ENCODE measurements at regions of chrX and their contacts with region 1.

Region 1: GRCh38 chrX:47193475-47194193 is at the start of gene UBA1:
- DNase-seq: peak; percentile 69 to 97 (median 95)
- ATAC-seq: peak; percentile 89
- H3K4me3 ChIP-seq: peak within 1 kb of the TSS; percentile 82
- H3K4me3 Mint-ChIP-seq: peak within 1 kb of the TSS; percentile 94 to 100 (median 98)
- H3K27ac ChIP-seq: peak within 1 kb of the TSS; percentile 94
- H3K27ac Mint-ChIP-seq: peak within 1 kb of the TSS; percentile 95 to 100 (median 98)
- H3K4me1 ChIP-seq: peaks cover 16 to 25% of the 10 kb centered on the region in 2 donors
- H3K4me1 Mint-ChIP-seq: peaks cover 19 to 77% (median 53%) of the 10 kb centered on the region in 7 donors
- H3K27me3 ChIP-seq: no peaks in the 10 kb centered on the region
- H3K27me3 Mint-ChIP-seq: no peaks in the 10 kb centered on the region
- total RNA-seq, gene UBA1: 98.0 to 183 (median 118) TPM

Region 2: GRCh38 chrX:47144626-47145394 is 48.8 kb before region 1 on chrX and contains the starts of genes NDUFB11 and RBM10:
- CTCF ChIA-PET with region 1: interaction called, 3 read pairs
- POLR2A ChIA-PET with region 1: interaction called, 25 read pairs
- intact Hi-C with region 1: loop called (anchors 1 kb)
- DNase-seq: peak; percentile 64 to 90 (median 87)
- ATAC-seq: peak; percentile 95
- H3K4me3 ChIP-seq: peak within 1 kb of the TSS; percentile 77
- H3K4me3 Mint-ChIP-seq: peak within 1 kb of the TSS; percentile 92 to 99 (median 96)
- H3K27ac ChIP-seq: peak within 1 kb of the TSS; percentile 94
- H3K27ac Mint-ChIP-seq: peak within 1 kb of the TSS; percentile 93 to 99 (median 96)
- H3K4me1 ChIP-seq: peaks cover 6 to 12% of the 10 kb centered on the region in 2 donors
- H3K4me1 Mint-ChIP-seq: peaks cover 6 to 42% (median 26%) of the 10 kb centered on the region in 7 donors
- H3K27me3 ChIP-seq: no peaks in the 10 kb centered on the region
- H3K27me3 Mint-ChIP-seq: no peaks in the 10 kb centered on the region
- total RNA-seq, gene NDUFB11: 51.3 to 92.5 (median 55.2) TPM
- total RNA-seq, gene RBM10: 31.8 to 55.6 (median 47.6) TPM

Region 3: GRCh38 chrX:47311932-47312774 is 118.5 kb after region 1 on chrX:
- CTCF ChIA-PET with region 1: no interaction called
- POLR2A ChIA-PET with region 1: interaction called, 3 read pairs
- intact Hi-C with region 1: loop called (anchors 1 kb)
- DNase-seq: peak; percentile 6 to 57 (median 39)
- ATAC-seq: peak; percentile 69
- H3K4me3 ChIP-seq: no peak overlapping the region
- H3K4me3 Mint-ChIP-seq: no peak overlapping the region
- H3K27ac ChIP-seq: no peak overlapping the region
- H3K27ac Mint-ChIP-seq: no peak overlapping the region
- H3K4me1 ChIP-seq: no peaks in the 10 kb centered on the region
- H3K4me1 Mint-ChIP-seq: no peaks in the 10 kb centered on the region
- H3K27me3 ChIP-seq: no peaks in the 10 kb centered on the region
- H3K27me3 Mint-ChIP-seq: no peaks in the 10 kb centered on the region

Region 4: GRCh38 chrX:47482512-47483309 is 289.1 kb after region 1 on chrX and contains the start of gene ZNF41:
- CTCF ChIA-PET with region 1: interaction called, 3 read pairs
- POLR2A ChIA-PET with region 1: interaction called, 4 read pairs
- intact Hi-C with region 1: loop called (anchors 1 kb)
- DNase-seq: peak; percentile 48 to 84 (median 76)
- ATAC-seq: peak; percentile 95
- H3K4me3 ChIP-seq: peak within 1 kb of the TSS; percentile 85
- H3K4me3 Mint-ChIP-seq: peak within 1 kb of the TSS; percentile 81 to 97 (median 90)
- H3K27ac ChIP-seq: peak within 1 kb of the TSS; percentile 88
- H3K27ac Mint-ChIP-seq: peak within 1 kb of the TSS; percentile 82 to 98 (median 96)
- H3K4me1 ChIP-seq: peaks cover 9 to 22% of the 10 kb centered on the region in 2 donors
- H3K4me1 Mint-ChIP-seq: peaks cover 22 to 50% (median 37%) of the 10 kb centered on the region in 7 donors
- H3K27me3 ChIP-seq: no peaks in the 10 kb centered on the region
- H3K27me3 Mint-ChIP-seq: no peaks in the 10 kb centered on the region
- total RNA-seq, gene ZNF41: 7.5 to 17.8 (median 14.7) TPM

Region 5: GRCh38 chrX:47619486-47620302 is 426.1 kb after region 1 on chrX and contains the start of gene SYN1:
- CTCF ChIA-PET with region 1: no interaction called
- POLR2A ChIA-PET with region 1: no interaction called
- intact Hi-C with region 1: loop called in 1 of 2 experiments (anchors 5 kb)
- DNase-seq: peak; percentile 66 to 84 (median 75)
- ATAC-seq: peak; percentile 96
- H3K4me3 ChIP-seq: peak within 1 kb of the TSS; percentile 35
- H3K4me3 Mint-ChIP-seq: peak within 1 kb of the TSS; percentile 49 to 76 (median 69)
- H3K27ac ChIP-seq: no peak within 1 kb of the TSS
- H3K27ac Mint-ChIP-seq: peak within 1 kb of the TSS in 3 of 9 donors; percentile 32 to 63 (median 39)
- H3K4me1 ChIP-seq: peaks cover 4% of the 10 kb centered on the region in 2 donors
- H3K4me1 Mint-ChIP-seq: peaks cover 0 to 38% (median 13%) of the 10 kb centered on the region in 7 donors
- H3K27me3 ChIP-seq: no peaks in the 10 kb centered on the region
- H3K27me3 Mint-ChIP-seq: peaks cover 0 to 61% (median 3%) of the 10 kb centered on the region in 5 donors
- total RNA-seq, gene SYN1: 0.24 to 1.5 (median 0.97) TPM

Region 6: GRCh38 chrX:47751670-47752069 is 558.0 kb after region 1 on chrX:
- CTCF ChIA-PET with region 1: no interaction called
- POLR2A ChIA-PET with region 1: no interaction called
- intact Hi-C with region 1: loop called in 1 of 2 experiments (anchors 5 kb)
- DNase-seq: peak in 5 of 9 donors; percentile 0 to 28 (median 13)
- ATAC-seq: peak; percentile 42
- H3K4me3 ChIP-seq: no peak overlapping the region
- H3K4me3 Mint-ChIP-seq: no peak overlapping the region
- H3K27ac ChIP-seq: no peak overlapping the region
- H3K27ac Mint-ChIP-seq: peak overlapping the region in 1 of 9 donors; percentile 15
- H3K4me1 ChIP-seq: no peaks in the 10 kb centered on the region
- H3K4me1 Mint-ChIP-seq: peaks cover 0 to 3% (median 0%) of the 10 kb centered on the region in 7 donors
- H3K27me3 ChIP-seq: no peaks in the 10 kb centered on the region
- H3K27me3 Mint-ChIP-seq: peaks cover 0 to 4% (median 0%) of the 10 kb centered on the region in 5 donors